Heart right ventricle (tissue), 16 donors: ENCODE measurements at regions of chr2 and their contacts with region 1.

Region 1: DNA sequence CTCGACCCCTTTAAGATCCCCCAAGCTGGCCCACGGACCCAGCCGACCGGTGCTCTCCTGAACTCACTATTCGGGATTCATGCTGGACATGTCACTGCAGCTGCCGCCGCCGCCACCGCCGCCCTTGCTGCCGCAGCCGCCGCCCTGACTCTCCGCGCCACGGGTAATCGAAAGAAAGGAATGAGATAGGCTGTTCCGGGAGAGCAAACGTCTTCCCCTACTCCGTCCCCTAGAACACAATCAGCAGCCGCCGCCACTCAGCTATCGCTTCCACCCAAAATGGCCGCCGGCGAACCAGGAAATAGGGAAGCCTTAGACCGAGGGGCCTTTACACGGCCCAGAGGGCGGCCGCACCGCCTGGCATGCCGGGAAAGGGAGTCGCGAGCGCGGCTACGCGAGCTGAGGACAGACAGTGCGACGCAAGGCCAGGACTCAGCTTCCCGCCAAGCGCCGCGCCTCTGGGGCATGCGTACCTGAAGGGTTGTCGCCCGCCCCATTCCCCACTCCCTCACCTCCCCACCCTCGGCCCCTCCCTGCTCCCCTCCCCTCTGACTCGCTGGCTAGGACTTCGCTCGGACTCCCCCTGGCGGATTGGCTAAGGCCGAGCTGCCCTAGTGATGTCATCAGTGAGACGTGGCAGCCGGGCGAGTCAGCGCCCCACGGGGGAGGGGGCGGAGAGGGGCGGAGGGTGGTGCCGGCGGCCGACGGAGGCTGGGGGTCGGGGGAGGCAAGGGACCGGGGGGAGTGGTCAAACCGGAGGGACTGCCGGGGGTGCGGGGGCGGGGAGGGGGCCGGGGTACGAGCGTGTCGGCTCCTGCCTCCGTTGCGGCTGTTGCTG is at the start of gene RAB1A:
- DNase-seq: peak; percentile 100
- ATAC-seq: peak; percentile 94 to 99 (median 98)
- H3K4me3 ChIP-seq: peak within 1 kb of the TSS; percentile 54 to 96 (median 78)
- H3K27ac ChIP-seq: peak within 1 kb of the TSS; percentile 86 to 99 (median 94)
- H3K4me1 ChIP-seq: peaks cover 7 to 58% (median 41%) of the 10 kb centered on the region in 9 donors
- H3K27me3 ChIP-seq: no peaks in the 10 kb centered on the region
- CTCF ChIP-seq: peak in 8 of 9 donors; percentile 37 to 71 (median 57)
- total RNA-seq, gene RAB1A: 103 to 148 (median 117) TPM

Region 2: GRCh38 chr2:64595397-64596160 is 534.5 kb before region 1 on chr2:
- intact Hi-C with region 1: no loop called
- DNase-seq: no peak
- ATAC-seq: no peak
- H3K4me3 ChIP-seq: no peak overlapping the region
- H3K27ac ChIP-seq: no peak overlapping the region
- H3K4me1 ChIP-seq: peaks cover 0 to 26% (median 9%) of the 10 kb centered on the region in 9 donors
- H3K27me3 ChIP-seq: no peaks in the 10 kb centered on the region
- CTCF ChIP-seq: peak in 6 of 9 donors; percentile 7 to 52 (median 36)

Region 3: GRCh38 chr2:65056215-65057053 is 73.6 kb before region 1 on chr2 and contains the start of gene CEP68:
- intact Hi-C with region 1: loop called in 6 of 10 experiments (anchors 2 to 10 kb)
- DNase-seq: peak; percentile 96 to 98
- ATAC-seq: peak; percentile 94 to 98 (median 98)
- H3K4me3 ChIP-seq: peak within 1 kb of the TSS; percentile 57 to 89 (median 78)
- H3K27ac ChIP-seq: peak within 1 kb of the TSS; percentile 81 to 97 (median 92)
- H3K4me1 ChIP-seq: peaks cover 6 to 65% (median 50%) of the 10 kb centered on the region in 9 donors
- H3K27me3 ChIP-seq: no peaks in the 10 kb centered on the region
- CTCF ChIP-seq: no peak
- total RNA-seq, gene CEP68: 12.5 to 28.4 (median 23.1) TPM

Region 4: DNA sequence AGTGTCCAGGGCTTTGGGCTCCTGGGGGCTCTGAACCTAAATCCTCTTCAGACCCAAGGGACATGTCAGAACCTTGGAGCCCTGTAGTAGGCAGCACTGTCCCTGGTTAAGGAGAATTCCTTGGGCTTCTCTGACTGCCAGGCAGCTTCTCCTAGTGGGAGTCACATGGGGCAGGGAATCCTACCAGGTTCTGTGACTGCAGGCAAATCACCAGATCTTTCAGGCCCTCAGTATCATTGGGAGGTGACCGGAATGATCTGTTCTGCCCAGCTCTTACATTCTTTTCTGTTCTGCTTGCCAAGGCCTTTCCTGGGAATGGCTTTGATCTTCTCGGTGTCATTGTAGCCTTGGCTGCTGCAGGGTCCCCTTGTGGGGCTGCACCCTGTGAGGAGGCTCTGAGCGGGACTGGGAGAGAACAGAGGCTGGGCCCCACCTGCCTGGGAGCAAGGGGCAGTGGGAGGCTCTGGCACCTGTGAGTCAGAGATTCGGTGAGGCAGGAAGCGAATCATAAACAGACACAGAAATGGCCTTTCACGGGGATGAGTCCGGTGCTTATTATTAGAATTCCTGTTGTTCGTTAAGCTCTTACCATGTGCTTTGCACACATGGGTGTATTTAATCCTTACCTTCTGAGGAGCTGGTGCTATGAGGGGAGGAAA is 59.7 kb before region 1 on chr2:
- intact Hi-C with region 1: loop called in 8 of 10 experiments (anchors 2 to 10 kb)
- DNase-seq: no peak
- ATAC-seq: peak in 7 of 8 donors; percentile 26 to 53 (median 46)
- H3K4me3 ChIP-seq: no peak overlapping the region
- H3K27ac ChIP-seq: peak overlapping the region in 9 of 10 donors; percentile 22 to 72 (median 60)
- H3K4me1 ChIP-seq: peaks cover 27 to 85% (median 65%) of the 10 kb centered on the region in 9 donors
- H3K27me3 ChIP-seq: no peaks in the 10 kb centered on the region
- CTCF ChIP-seq: peak in 7 of 9 donors; percentile 6 to 45 (median 29)

Region 5: DNA sequence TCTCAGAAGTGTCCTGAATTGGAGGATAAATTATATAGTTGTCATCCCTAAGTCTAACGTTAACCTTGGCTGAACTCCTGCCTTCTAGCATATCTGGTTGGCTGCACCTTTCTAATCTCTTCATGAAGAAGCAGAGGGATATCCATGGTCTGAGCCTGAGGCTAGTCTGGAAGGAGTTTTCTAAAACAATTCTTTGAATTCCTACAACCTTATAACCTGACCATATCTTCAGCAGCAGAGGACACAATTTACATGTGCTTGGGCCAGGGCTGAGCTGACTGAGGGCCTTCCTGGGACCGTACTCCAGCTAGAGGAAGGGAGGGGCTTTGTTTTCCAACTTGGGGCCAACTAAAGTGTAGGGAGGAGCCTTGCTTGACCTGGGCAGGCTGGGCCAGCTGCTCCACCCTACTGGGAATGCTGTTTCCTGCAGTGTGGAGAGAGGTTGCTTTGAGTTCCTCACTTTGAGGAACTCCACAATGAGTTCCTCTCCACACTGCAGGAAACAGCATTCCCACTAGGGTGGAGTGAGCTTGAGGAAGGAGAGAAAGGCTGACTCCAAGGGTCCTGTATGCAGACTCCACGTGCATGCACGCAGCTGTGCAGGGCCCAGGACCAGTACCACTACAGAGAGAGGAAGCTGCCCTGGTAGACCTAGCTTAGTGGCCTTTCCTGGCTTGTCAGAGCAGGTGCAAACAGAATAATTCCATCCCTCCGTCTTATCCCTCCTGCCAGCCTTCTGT is 54.3 kb before region 1 on chr2:
- intact Hi-C with region 1: loop called in 5 of 10 experiments (anchors 5 to 10 kb)
- DNase-seq: peak; percentile 52 to 64
- ATAC-seq: peak; percentile 74 to 89 (median 84)
- H3K4me3 ChIP-seq: no peak overlapping the region
- H3K27ac ChIP-seq: peak overlapping the region; percentile 17 to 66 (median 40)
- H3K4me1 ChIP-seq: peaks cover 7 to 65% (median 42%) of the 10 kb centered on the region in 9 donors
- H3K27me3 ChIP-seq: no peaks in the 10 kb centered on the region
- CTCF ChIP-seq: peak in 1 of 9 donors; percentile 7

Region 6: GRCh38 chr2:65092791-65093190 is 37.3 kb before region 1 on chr2:
- intact Hi-C with region 1: loop called in 1 of 10 experiments (anchors 5 kb)
- DNase-seq: no peak
- ATAC-seq: no peak
- H3K4me3 ChIP-seq: no peak overlapping the region
- H3K27ac ChIP-seq: no peak overlapping the region
- H3K4me1 ChIP-seq: peaks cover 0 to 27% (median 17%) of the 10 kb centered on the region in 9 donors
- H3K27me3 ChIP-seq: no peaks in the 10 kb centered on the region
- CTCF ChIP-seq: no peak

Region 7: GRCh38 chr2:65164426-65164891 is 34.4 kb after region 1 on chr2:
- intact Hi-C with region 1: loop called in 1 of 10 experiments (anchors 5 kb)
- DNase-seq: peak in 1 of 2 donors; percentile 48
- ATAC-seq: peak; percentile 62 to 93 (median 84)
- H3K4me3 ChIP-seq: no peak overlapping the region
- H3K27ac ChIP-seq: peak overlapping the region in 9 of 10 donors; percentile 18 to 73 (median 50)
- H3K4me1 ChIP-seq: peaks cover 6 to 33% (median 19%) of the 10 kb centered on the region in 9 donors
- H3K27me3 ChIP-seq: no peaks in the 10 kb centered on the region
- CTCF ChIP-seq: no peak

Region 8: GRCh38 chr2:65789923-65790675 is 660.1 kb after region 1 on chr2:
- intact Hi-C with region 1: no loop called
- DNase-seq: no peak
- ATAC-seq: no peak
- H3K4me3 ChIP-seq: no peak overlapping the region
- H3K27ac ChIP-seq: no peak overlapping the region
- H3K4me1 ChIP-seq: no peaks in the 10 kb centered on the region
- H3K27me3 ChIP-seq: peaks cover 0 to 10% (median 0%) of the 10 kb centered on the region in 7 donors
- CTCF ChIP-seq: no peak